ENCODE measurements at regions of chr14 and their contacts with region 1.

Region 1: DNA sequence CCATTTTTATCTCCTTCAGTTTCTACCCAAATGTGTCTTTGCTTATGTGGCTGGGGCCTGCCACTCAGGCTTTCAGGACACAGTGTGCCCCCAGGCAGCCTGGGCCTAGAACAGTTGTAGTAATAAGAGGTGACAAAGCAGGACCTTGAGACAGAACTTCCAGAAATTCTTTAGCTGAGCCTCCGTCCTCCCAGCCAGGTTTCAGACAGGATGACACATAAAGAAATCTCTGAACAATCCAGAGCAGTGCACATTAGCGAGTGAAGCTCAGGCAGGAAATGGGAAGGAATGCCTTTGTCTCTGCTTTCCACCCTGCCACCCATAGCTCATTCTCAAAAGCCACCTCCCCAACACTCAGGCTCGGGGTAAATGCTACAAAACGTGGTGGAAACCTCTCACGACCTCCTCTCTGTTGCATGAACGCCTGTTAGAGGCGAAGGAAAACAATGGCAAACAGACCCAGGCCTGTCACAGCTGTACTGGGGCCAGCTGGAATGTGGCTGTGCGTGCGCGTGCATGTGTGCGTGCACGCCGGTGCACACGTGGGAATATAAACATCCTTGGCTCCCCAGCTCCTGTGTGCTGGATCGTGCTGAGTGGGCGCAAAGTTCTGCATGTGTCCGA is 286.7 kb downstream of the ZFP36L1 start:
- DNase-seq: no peak
- ATAC-seq: peak; percentile 10
- H3K4me3 Mint-ChIP-seq: peak overlapping the region; percentile 62
- H3K27ac Mint-ChIP-seq: peak overlapping the region; percentile 98
- H3K4me1 Mint-ChIP-seq: peaks cover 87% of the 10 kb centered on the region
- H3K27me3 Mint-ChIP-seq: no peaks in the 10 kb centered on the region
- CTCF ChIP-seq: no peak

Region 2: DNA sequence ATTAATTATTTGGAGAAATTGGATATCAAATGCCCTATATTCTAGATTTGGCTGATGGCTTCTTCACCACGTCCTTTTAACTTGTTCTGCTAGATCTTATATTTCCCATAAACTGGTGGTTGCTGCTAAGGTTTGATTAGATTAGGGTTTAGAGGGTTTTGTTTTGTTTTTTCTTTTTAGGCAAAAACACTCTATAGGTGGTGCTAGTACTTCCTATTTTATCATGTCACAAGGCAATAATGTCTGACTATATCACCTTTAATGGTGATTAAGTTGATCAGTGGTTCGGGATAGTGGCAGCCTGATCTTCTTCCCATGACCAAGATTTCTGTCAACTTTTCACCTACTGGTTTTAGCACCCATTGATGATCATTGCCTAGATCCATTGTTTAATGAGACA is 231.4 kb before region 1 on chr14:
- CTCF ChIA-PET with region 1: interaction called, 3 read pairs
- POLR2A ChIA-PET with region 1: interaction called, 23 read pairs
- intact Hi-C with region 1: loop called (anchors 5 kb)
- DNase-seq: no peak
- ATAC-seq: no peak
- H3K4me3 Mint-ChIP-seq: peak overlapping the region; percentile 65
- H3K27ac Mint-ChIP-seq: peak overlapping the region; percentile 99
- H3K4me1 Mint-ChIP-seq: peaks cover 93% of the 10 kb centered on the region
- H3K27me3 Mint-ChIP-seq: no peaks in the 10 kb centered on the region
- CTCF ChIP-seq: no peak

Region 3: GRCh38 chr14:68369281-68370056 is 136.7 kb before region 1 on chr14:
- CTCF ChIA-PET with region 1: no interaction called
- POLR2A ChIA-PET with region 1: interaction called, 17 read pairs
- intact Hi-C with region 1: loop called (anchors 2 kb)
- DNase-seq: no peak
- ATAC-seq: peak; percentile 23
- H3K4me3 Mint-ChIP-seq: peak overlapping the region; percentile 59
- H3K27ac Mint-ChIP-seq: peak overlapping the region; percentile 95
- H3K4me1 Mint-ChIP-seq: peaks cover 94% of the 10 kb centered on the region
- H3K27me3 Mint-ChIP-seq: no peaks in the 10 kb centered on the region
- CTCF ChIP-seq: no peak

Region 4: DNA sequence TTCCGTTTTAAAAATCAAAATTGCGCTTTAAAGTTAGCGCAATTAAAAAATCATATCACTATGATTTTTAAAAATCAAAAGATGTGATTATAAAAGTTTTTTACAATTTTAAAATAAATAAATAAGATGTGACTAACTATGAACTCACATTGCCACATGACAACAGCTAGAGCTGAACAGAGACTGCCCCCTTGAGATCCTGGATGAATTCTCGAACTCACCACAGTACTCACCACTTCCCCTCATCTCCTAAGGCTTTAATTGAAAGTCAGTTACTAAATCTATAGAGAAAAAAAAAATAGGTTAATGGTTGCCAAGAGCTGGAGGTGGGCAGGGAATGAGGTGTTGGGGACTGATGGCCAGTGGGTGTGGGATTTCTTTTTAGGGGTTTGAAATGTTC is 97.5 kb before region 1 on chr14:
- CTCF ChIA-PET with region 1: interaction called, 4 read pairs
- POLR2A ChIA-PET with region 1: interaction called, 96 read pairs
- intact Hi-C with region 1: loop called (anchors 1 kb)
- DNase-seq: no peak
- ATAC-seq: peak; percentile 53
- H3K4me3 Mint-ChIP-seq: peak overlapping the region; percentile 16
- H3K27ac Mint-ChIP-seq: peak overlapping the region; percentile 80
- H3K4me1 Mint-ChIP-seq: peaks cover 75% of the 10 kb centered on the region
- H3K27me3 Mint-ChIP-seq: no peaks in the 10 kb centered on the region
- CTCF ChIP-seq: no peak

Region 5: GRCh38 chr14:68495101-68496039 is 10.8 kb before region 1 on chr14:
- CTCF ChIA-PET with region 1: interaction called, 21 read pairs
- POLR2A ChIA-PET with region 1: interaction called, 165 read pairs
- intact Hi-C with region 1: loop called (anchors 1 kb)
- DNase-seq: no peak
- ATAC-seq: peak; percentile 92
- H3K4me3 Mint-ChIP-seq: peak overlapping the region; percentile 64
- H3K27ac Mint-ChIP-seq: peak overlapping the region; percentile 98
- H3K4me1 Mint-ChIP-seq: peaks cover 84% of the 10 kb centered on the region
- H3K27me3 Mint-ChIP-seq: no peaks in the 10 kb centered on the region
- CTCF ChIP-seq: no peak

Region 6: GRCh38 chr14:68633071-68633991 is 127.2 kb after region 1 on chr14:
- CTCF ChIA-PET with region 1: no interaction called
- POLR2A ChIA-PET with region 1: interaction called, 13 read pairs
- intact Hi-C with region 1: no loop called
- DNase-seq: no peak
- ATAC-seq: peak; percentile 73
- H3K4me3 Mint-ChIP-seq: peak overlapping the region; percentile 48
- H3K27ac Mint-ChIP-seq: peak overlapping the region; percentile 67
- H3K4me1 Mint-ChIP-seq: peaks cover 20% of the 10 kb centered on the region
- H3K27me3 Mint-ChIP-seq: no peaks in the 10 kb centered on the region
- CTCF ChIP-seq: no peak

Region 7: DNA sequence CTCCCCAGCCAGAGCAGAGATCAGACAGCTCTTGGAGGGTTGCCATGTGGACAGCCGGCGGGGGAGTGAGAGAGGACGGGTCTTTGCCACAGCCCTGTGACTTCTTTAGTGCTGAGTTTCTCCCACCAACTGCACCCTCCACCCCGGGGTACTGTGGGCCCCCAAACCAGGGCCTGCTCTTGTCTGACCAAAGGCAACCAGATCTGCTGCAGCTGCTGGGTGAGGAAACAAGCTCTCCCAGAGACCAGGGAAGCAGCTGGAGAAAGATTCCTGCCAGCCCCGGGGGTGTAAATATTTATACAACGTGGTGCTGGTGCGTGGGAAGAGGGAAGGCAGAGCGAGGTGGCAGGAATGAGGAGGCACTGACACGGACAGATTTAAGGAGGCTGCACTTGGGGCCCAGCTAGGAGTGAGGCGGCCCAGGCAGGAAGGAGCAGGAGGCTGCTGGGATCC is 301.0 kb after region 1 on chr14:
- CTCF ChIA-PET with region 1: no interaction called
- POLR2A ChIA-PET with region 1: interaction called, 120 read pairs
- intact Hi-C with region 1: no loop called
- DNase-seq: no peak
- ATAC-seq: no peak
- H3K4me3 Mint-ChIP-seq: peak overlapping the region; percentile 71
- H3K27ac Mint-ChIP-seq: peak overlapping the region; percentile 98
- H3K4me1 Mint-ChIP-seq: peaks cover 80% of the 10 kb centered on the region
- H3K27me3 Mint-ChIP-seq: no peaks in the 10 kb centered on the region
- CTCF ChIP-seq: no peak

Region 8: DNA sequence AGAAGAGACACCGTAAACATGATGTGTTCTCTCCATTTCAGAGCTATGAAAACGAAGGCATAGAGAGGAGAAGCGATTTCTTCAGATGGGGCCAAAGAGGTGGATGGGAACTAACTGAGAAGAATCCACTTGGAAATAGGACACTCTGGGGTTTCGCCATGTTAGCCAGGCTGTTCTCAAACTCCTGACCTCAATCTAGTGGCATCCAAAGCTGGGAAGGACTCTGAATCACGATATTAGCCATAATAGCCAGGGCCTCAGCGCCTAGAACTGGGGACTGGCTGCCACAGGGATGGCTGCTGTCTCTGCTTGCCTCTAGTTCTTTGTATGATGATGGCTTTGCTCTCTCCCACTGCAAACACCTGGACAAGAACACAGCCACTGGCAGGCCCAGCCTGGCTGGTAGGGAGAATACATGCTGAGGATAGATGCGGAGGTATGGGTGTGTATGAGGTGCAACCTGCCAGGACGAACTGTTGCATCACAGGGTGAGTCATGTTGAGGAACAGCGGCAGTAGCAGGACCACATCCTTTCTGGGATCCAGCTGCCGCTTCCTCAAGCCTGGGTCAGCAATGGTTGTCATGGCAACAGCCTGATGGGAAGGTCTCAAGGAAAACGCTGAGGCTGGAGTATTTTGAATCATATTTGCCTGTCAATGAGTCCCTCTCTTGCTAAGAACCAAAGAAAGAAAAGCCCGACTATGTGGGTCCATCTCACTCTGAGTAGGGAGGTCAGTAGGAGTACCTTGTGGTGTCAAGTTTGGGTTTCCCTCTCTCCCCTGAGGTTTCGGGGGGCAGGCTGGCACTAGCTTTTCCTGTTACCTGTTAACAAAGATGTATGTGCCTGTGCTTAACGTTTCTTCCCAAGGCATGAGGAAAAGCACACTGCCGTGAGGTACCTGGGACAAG is 1037.5 kb after region 1 on chr14:
- CTCF ChIA-PET with region 1: no interaction called
- POLR2A ChIA-PET with region 1: no interaction called
- intact Hi-C with region 1: no loop called
- DNase-seq: no peak
- ATAC-seq: no peak
- H3K4me3 Mint-ChIP-seq: no peak overlapping the region
- H3K27ac Mint-ChIP-seq: no peak overlapping the region
- H3K4me1 Mint-ChIP-seq: no peaks in the 10 kb centered on the region
- H3K27me3 Mint-ChIP-seq: peaks cover 33% of the 10 kb centered on the region
- CTCF ChIP-seq: no peak

Measured in activated B cell treated with CpG ODN at 0.5 μM for 24 hours (primary cell).